Activated T-helper 1 cell treated with anti-CD3 and anti-CD28 coated beads, Interleukin-12 subunit alpha, Interleukin-12 subunit beta, Interleukin-2, Interleukin-4 antibody, amounts not matched to agents 30 ng/mL and 10 ng/mL and 1 ng/mL, durations not matched to agents 14 hours and 24 hours and 36 hours (primary cell): ENCODE measurements at regions of chr14 and their contacts with region 1.

Region 1: GRCh38 chr14:96741151-96741977 is 55.8 kb upstream of the VRK1 start:
- DNase-seq: peak; percentile 66
- H3K4me3 Mint-ChIP-seq: peak overlapping the region; percentile 54
- H3K27ac Mint-ChIP-seq: no peak overlapping the region
- H3K4me1 Mint-ChIP-seq: peaks cover 9% of the 10 kb centered on the region
- H3K27me3 Mint-ChIP-seq: peaks cover 64% of the 10 kb centered on the region

Region 2: DNA sequence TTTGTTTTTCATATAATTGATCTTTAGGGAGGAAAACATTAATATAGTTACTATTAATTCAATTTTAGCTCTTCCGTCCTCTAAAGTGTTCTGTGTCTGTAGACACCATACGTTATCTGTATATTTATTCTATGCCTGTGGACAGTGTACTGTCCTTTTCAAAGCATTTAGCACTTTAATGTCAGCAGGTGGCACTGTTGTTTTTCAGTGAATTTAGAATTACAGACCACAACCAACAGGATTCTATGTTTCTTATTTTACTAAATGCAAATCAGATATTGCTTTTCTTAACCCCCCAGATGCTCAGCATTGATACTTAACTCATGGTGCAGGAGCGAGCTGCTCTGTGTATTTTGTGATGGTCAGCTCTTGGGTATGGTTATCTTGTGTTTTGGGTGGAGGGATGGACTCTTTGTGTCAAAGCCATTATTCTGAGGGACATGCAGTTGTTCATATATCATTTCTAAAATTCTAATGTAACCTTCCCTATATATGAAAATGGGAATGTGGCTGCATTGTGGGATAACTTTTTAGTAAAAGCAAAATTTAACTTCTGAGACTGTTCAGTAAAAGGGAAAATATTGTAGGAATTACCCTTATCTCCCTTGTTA is 174.0 kb before region 1 on chr14:
- intact Hi-C with region 1: loop called (anchors 1 kb)
- DNase-seq: no peak
- H3K4me3 Mint-ChIP-seq: no peak overlapping the region
- H3K27ac Mint-ChIP-seq: no peak overlapping the region
- H3K4me1 Mint-ChIP-seq: no peaks in the 10 kb centered on the region
- H3K27me3 Mint-ChIP-seq: no peaks in the 10 kb centered on the region

Region 3: GRCh38 chr14:96592591-96593386 is 148.6 kb before region 1 on chr14:
- intact Hi-C with region 1: loop called (anchors 2 kb)
- DNase-seq: peak; percentile 66
- H3K4me3 Mint-ChIP-seq: peak overlapping the region; percentile 71
- H3K27ac Mint-ChIP-seq: no peak overlapping the region
- H3K4me1 Mint-ChIP-seq: peaks cover 11% of the 10 kb centered on the region
- H3K27me3 Mint-ChIP-seq: peaks cover 14% of the 10 kb centered on the region

Region 4: DNA sequence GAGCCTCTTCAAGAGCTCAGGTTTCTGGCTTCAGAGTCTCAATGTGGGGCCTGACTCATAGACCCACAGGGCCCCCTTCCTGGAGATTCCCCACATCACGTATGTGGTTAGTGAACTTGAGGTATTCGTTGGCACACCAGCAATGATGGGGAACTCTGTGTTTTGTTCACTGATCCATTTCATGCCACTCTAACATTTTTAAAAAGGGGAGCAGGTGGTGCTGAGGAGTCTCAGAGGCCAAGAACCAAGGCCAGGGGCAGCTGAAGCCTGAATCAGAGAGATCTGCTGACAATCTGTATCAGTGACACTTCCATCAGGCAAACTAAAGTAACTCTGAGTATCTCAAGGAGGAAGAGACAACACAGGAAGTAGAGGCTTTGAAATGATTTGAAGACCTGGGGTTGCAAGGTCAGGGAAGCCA is 379.3 kb after region 1 on chr14:
- intact Hi-C with region 1: no loop called
- DNase-seq: peak; percentile 50
- H3K4me3 Mint-ChIP-seq: peak overlapping the region; percentile 63
- H3K27ac Mint-ChIP-seq: peak overlapping the region; percentile 89
- H3K4me1 Mint-ChIP-seq: peaks cover 27% of the 10 kb centered on the region
- H3K27me3 Mint-ChIP-seq: no peaks in the 10 kb centered on the region